ENCODE measurements at regions of chr11 and their contacts with region 1.

Region 1: GRCh38 chr11:62108017-62108750 is 15.6 kb upstream of the INCENP start:
- DNase-seq: no peak
- H3K4me3 ChIP-seq: no peak overlapping the region
- H3K27ac ChIP-seq: no peak overlapping the region
- H3K4me1 ChIP-seq: peaks cover 13 to 34% of the 10 kb centered on the region in 2 donors
- H3K27me3 ChIP-seq: no peaks in the 10 kb centered on the region
- CTCF ChIP-seq: peak; percentile 82

Region 2: GRCh38 chr11:61769169-61769920 is 338.8 kb before region 1 on chr11:
- intact Hi-C with region 1: no loop called
- DNase-seq: no peak
- H3K4me3 ChIP-seq: no peak overlapping the region
- H3K27ac ChIP-seq: no peak overlapping the region
- H3K4me1 ChIP-seq: no peaks in the 10 kb centered on the region
- H3K27me3 ChIP-seq: no peaks in the 10 kb centered on the region
- CTCF ChIP-seq: no peak

Region 3: DNA sequence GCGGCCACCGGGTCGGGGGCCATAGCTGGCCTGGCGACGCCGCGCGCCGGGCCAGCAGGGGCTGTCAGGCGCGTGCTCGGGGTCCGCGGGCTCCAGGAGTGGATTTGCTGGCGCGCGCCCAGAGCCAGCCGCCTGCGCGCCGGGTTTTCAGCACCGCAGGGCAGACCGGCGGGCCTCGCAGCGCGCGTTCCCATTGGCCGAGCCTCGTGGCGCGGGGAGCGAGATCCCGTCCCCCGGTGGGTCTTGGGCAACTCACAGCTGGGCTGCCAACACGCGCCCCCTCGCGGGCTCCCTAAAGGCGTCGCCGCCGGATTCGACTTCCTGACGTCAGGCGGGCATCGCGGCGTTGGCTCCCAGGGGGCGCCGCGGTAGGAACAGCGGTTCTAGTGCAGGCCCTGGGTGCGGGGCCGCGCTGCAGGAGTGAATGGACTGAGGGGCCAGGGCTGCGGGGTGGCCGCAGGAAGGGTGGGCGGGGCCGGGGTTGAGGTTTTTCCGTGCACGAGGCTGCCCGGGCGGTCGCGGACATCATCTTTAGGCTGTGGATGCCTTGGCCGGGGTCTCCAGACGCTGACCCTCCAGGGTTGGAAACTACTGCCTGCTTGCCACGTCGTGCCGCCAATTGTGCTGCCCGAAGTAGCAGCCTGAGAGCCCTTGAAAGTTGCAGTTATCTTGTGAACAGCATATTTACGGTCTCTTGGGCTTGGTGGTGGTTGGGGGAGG is 291.3 kb before region 1 on chr11 and contains the start of gene FADS1:
- intact Hi-C with region 1: loop called (anchors 1 kb)
- DNase-seq: peak; percentile 78 to 98
- H3K4me3 ChIP-seq: peak within 1 kb of the TSS; percentile 85 to 86
- H3K27ac ChIP-seq: peak within 1 kb of the TSS; percentile 99
- H3K4me1 ChIP-seq: peaks cover 0 to 9% of the 10 kb centered on the region in 2 donors
- H3K27me3 ChIP-seq: no peaks in the 10 kb centered on the region
- CTCF ChIP-seq: peak; percentile 55 to 74 (median 58)
- total RNA-seq, gene FADS1: 47.1 TPM

Region 4: GRCh38 chr11:61899146-61899841 is 208.9 kb before region 1 on chr11:
- intact Hi-C with region 1: loop called (anchors 1 kb)
- DNase-seq: peak in 1 of 2 donors; percentile 91
- H3K4me3 ChIP-seq: no peak overlapping the region
- H3K27ac ChIP-seq: peak overlapping the region in 1 of 2 donors; percentile 30
- H3K4me1 ChIP-seq: no peaks in the 10 kb centered on the region
- H3K27me3 ChIP-seq: no peaks in the 10 kb centered on the region
- CTCF ChIP-seq: peak; percentile 99 to 100 (median 99)

Region 5: DNA sequence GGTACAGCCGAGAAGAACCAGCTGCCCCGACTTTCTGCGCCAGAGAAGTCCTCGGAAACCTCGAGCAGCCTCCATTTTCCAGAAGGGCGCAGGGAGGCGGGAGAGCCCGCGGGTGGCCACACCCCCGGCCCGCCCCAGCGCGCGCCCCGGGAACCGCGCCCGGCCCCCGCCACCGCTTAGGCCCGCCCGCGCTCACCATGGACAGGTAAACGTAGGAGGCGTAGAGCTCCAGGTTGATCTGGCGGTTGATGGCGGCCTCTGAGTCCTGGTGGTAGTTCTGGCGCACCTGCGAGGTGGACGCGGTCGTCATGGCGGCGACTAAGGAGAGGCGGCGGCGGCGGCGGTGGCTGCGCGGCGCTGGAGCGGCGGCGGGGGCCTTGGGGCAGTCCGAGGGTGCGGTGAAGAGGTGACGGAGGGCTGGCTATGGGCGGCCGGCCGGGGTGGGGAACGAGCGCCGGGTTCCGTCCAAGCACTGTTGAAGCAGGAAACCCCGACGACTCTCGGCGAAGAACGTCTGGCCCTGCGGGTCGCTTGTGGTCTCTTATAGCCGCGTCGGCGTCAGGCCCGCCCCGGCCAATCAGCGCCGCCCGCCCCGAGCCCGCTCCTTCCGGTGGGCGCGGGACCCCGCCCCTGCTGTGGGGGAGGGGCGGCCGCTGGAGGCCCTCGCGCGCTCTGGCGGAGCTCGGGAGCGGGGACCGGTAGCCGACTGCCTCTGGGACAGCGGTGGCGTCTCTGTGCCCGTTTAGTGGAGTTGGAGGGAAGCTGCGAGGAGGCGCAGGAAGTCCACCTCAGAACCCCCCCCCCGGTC is 140.9 kb before region 1 on chr11 and contains the start of gene FTH1:
- intact Hi-C with region 1: loop called (anchors 1 kb)
- DNase-seq: peak; percentile 61 to 94
- H3K4me3 ChIP-seq: peak within 1 kb of the TSS; percentile 88 to 96
- H3K27ac ChIP-seq: peak within 1 kb of the TSS; percentile 98 to 99
- H3K4me1 ChIP-seq: peaks cover 23 to 46% of the 10 kb centered on the region in 2 donors
- H3K27me3 ChIP-seq: no peaks in the 10 kb centered on the region
- CTCF ChIP-seq: no peak
- total RNA-seq, gene FTH1: 2,353 TPM

Region 6: GRCh38 chr11:62001450-62002191 is 106.6 kb before region 1 on chr11:
- intact Hi-C with region 1: no loop called
- DNase-seq: no peak
- H3K4me3 ChIP-seq: no peak overlapping the region
- H3K27ac ChIP-seq: no peak overlapping the region
- H3K4me1 ChIP-seq: peaks cover 0 to 10% of the 10 kb centered on the region in 2 donors
- H3K27me3 ChIP-seq: no peaks in the 10 kb centered on the region
- CTCF ChIP-seq: no peak

Region 7: GRCh38 chr11:62193952-62194351 is 85.8 kb after region 1 on chr11:
- intact Hi-C with region 1: no loop called
- DNase-seq: no peak
- H3K4me3 ChIP-seq: no peak overlapping the region
- H3K27ac ChIP-seq: no peak overlapping the region
- H3K4me1 ChIP-seq: no peaks in the 10 kb centered on the region
- H3K27me3 ChIP-seq: no peaks in the 10 kb centered on the region
- CTCF ChIP-seq: no peak

Region 8: GRCh38 chr11:62269650-62270278 is 161.6 kb after region 1 on chr11 and contains the start of gene SCGB2A2:
- intact Hi-C with region 1: no loop called
- DNase-seq: no peak
- H3K4me3 ChIP-seq: no peak within 1 kb of the TSS
- H3K27ac ChIP-seq: no peak within 1 kb of the TSS
- H3K4me1 ChIP-seq: no peaks in the 10 kb centered on the region
- H3K27me3 ChIP-seq: no peaks in the 10 kb centered on the region
- CTCF ChIP-seq: no peak
- total RNA-seq, gene SCGB2A2: not detected